ENCODE measurements at regions of chr12 and their contacts with region 1.

Region 1: DNA sequence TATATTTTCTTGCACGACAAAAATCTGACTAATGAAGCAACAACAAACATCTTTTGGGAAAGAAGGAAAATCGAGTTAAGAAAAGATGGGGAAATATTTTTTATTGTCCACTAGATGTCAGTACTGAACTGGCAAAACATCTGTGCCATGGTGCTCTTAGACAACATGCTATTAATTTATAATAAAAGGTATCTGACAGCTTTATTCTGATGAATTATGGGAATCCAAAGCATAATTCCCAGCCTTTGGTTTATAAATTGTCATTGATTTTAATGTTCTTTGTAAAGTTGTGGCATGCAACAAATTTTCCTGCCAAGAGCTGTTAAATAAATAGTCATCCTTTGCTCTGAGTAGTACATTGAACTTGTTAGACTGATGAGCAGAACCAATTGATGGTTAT is 231.2 kb downstream of the ETNK1 start:
- DNase-seq: no peak
- ATAC-seq: no peak
- H3K4me3 Mint-ChIP-seq: no peak overlapping the region
- H3K27ac Mint-ChIP-seq: no peak overlapping the region
- H3K4me1 Mint-ChIP-seq: no peaks in the 10 kb centered on the region
- H3K27me3 Mint-ChIP-seq: peaks cover 5% of the 10 kb centered on the region
- CTCF ChIP-seq: no peak

Region 2: DNA sequence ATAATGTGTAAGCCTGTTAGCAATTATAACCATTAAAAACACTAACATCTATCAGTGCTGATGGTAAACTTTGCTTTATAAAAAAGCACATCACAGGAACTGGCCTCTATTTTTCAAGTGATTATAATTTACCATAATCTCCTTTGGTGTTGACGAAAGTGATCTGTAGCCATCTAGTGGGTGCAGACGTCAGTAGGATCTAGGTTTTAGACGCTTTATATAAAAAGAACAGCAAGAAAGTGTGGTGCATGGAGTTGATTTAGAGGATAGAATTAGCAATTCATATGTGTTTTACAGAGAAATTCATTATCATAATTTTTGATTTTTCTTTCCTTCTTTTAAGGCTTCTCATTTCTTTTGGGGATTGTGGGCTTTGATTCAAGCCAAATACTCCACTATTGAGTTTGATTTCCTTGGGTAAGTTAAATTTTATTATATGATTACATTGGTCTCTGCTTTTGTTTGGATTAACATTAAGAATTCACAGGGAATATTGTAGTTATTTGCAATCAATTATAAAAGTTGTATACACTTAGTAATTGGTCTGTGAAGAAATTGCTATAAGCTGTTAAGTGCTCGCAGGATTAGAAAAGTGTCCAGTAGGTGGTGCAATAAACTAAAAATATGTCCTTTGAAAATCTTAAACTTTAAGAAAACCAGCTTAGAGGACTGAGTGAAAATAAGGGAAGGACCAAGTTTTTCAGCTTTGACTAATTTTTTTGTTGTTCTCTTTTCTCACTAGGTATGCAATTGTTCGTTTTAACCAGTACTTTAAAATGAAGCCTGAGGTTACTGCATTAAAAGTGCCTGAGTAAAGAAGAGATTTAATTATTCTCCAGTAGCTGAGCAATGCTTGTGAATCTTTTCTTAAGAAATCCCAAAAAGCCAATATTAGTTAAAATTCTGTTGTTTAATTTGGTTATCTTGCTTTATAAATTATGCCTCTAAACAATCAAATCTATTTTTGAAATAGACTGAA is 171.7 kb before region 1 on chr12:
- CTCF ChIA-PET with region 1: interaction called, 3 read pairs
- POLR2A ChIA-PET with region 1: no interaction called
- intact Hi-C with region 1: loop called (anchors 10 kb)
- DNase-seq: no peak
- ATAC-seq: peak; percentile 54
- H3K4me3 Mint-ChIP-seq: no peak overlapping the region
- H3K27ac Mint-ChIP-seq: no peak overlapping the region
- H3K4me1 Mint-ChIP-seq: peaks cover 26% of the 10 kb centered on the region
- H3K27me3 Mint-ChIP-seq: no peaks in the 10 kb centered on the region
- CTCF ChIP-seq: peak; percentile 54

Region 3: DNA sequence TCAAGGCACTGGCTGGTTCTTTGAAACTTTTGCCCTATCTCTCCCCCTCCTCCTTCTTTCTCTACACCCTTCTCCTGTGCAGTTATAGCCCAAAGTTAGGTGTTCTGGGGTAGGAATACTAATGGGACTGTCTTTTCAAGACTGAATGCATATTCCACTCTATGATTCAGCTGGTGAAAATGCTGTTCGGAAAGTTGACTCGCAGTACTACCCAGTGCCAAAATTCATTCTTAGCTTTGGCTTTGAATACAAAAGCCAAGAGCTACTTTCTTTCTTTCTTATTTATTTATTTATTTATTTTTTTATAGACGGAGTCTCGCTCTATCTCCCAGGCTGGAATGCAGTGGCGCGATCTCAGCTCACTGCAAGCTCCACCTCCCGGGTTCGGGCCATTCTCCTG is 18.0 kb after region 1 on chr12:
- CTCF ChIA-PET with region 1: no interaction called
- POLR2A ChIA-PET with region 1: no interaction called
- intact Hi-C with region 1: no loop called
- DNase-seq: no peak
- ATAC-seq: no peak
- H3K4me3 Mint-ChIP-seq: no peak overlapping the region
- H3K27ac Mint-ChIP-seq: no peak overlapping the region
- H3K4me1 Mint-ChIP-seq: no peaks in the 10 kb centered on the region
- H3K27me3 Mint-ChIP-seq: peaks cover 7% of the 10 kb centered on the region
- CTCF ChIP-seq: no peak